Natural killer cell (primary cell): ENCODE measurements at regions of chr1 and their contacts with region 1.

Region 1: GRCh38 chr1:206583707-206584648 is 28.3 kb downstream of the EIF2D start:
- DNase-seq: peak; percentile 84 to 94
- ATAC-seq: peak; percentile 24 to 59 (median 39)
- H3K4me3 ChIP-seq: no peak overlapping the region
- H3K4me3 Mint-ChIP-seq: peak overlapping the region; percentile 94
- H3K27ac ChIP-seq: peak overlapping the region; percentile 98
- H3K27ac Mint-ChIP-seq: peak overlapping the region; percentile 90 to 100
- H3K4me1 ChIP-seq: peaks cover 51% of the 10 kb centered on the region
- H3K4me1 Mint-ChIP-seq: peaks cover 62 to 66% of the 10 kb centered on the region in 2 donors
- H3K27me3 ChIP-seq: no peaks in the 10 kb centered on the region
- H3K27me3 Mint-ChIP-seq: no peaks in the 10 kb centered on the region
- CTCF ChIP-seq: peak; percentile 88

Region 2: DNA sequence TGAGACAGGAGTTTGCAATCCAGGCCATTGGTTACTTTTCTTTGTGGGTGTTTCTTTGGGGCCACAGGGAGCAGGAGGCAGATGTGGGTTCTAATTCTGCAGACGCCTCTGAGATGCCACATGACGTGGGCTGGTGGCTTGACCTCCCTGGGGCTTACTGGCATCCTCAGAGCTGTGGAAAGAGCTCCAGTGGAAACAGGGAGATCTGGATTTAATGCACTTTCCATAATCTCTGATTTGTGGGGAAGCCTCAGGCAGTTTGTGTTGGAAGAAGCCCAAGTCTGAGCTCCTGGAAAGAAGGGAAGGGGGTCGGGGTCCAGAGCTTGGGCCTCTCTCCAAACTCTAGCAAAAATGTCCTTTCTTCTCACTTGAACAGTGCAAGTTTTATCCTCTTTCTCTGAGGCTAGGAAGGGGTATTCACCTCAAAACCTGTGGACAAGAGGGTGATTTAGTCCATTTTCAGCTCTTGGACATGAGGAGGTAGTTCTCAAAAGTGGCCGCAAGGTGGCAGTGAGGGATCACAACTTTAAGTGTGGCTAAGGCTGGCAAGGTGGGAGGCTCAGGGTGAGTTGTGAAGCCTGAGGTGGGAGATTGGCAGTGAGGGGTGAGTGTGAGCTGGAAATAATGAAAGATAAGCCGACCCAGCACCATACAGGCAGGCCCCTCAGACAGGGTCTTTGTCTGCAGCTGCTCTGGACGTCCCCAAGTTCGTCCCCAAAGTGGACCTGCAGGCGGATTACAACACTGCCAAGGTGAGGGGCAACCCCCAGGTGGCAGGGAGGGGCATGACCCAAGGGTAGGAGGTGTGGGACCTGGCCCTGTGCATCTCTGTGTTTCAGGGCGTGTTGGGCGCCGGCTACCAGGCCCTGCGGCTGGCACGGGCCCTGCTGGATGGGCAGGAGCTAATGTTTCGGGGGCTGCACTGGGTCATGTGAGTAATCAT is 104.5 kb before region 1 on chr1:
- intact Hi-C with region 1: loop called (anchors 1 kb)
- DNase-seq: peak; percentile 47 to 86
- ATAC-seq: peak; percentile 72 to 96 (median 90)
- H3K4me3 ChIP-seq: no peak overlapping the region
- H3K4me3 Mint-ChIP-seq: no peak overlapping the region
- H3K27ac ChIP-seq: no peak overlapping the region
- H3K27ac Mint-ChIP-seq: peak overlapping the region; percentile 3 to 73
- H3K4me1 ChIP-seq: no peaks in the 10 kb centered on the region
- H3K4me1 Mint-ChIP-seq: peaks cover 6 to 7% of the 10 kb centered on the region in 2 donors
- H3K27me3 ChIP-seq: no peaks in the 10 kb centered on the region
- H3K27me3 Mint-ChIP-seq: no peaks in the 10 kb centered on the region
- CTCF ChIP-seq: peak; percentile 68

Region 3: DNA sequence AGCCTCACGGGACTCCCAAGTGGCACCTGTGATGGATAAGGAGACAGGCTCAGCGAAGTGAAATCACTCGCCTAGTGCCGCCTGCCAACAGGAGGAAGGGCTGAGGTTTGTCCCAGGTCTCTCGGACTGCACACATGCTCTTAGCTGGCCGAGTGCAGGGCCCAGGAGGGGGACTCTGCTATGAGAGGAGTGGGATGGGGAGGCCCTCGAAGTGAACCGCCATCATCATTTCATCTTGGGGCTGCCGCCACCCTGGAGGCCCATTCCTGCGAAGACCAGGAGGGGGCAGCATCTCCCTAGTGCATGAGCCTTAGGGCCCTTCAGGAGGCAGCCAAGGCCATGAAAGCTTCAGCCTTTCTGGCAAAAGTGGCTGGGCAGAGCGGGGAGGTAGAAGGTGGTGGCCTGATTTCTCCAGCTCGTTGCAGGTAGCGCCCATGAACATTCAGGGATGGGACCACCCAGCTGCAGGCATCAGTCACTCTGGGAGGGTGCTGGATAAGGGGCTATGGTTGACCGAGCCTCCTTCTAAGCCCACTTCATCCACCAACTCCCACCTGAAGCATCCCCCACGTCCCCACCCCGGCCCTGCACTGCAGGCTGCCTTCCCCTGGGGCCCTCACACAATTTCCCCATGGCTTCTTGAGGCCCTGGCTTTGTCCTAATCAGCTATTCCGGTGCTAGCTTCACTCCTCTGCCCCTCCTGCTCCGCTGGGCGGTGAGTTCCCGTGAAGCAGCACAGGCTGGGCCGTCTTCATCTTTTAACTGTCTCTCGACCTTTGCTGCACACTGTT is 93.8 kb before region 1 on chr1:
- intact Hi-C with region 1: loop called (anchors 1 kb)
- DNase-seq: peak; percentile 64 to 79
- ATAC-seq: peak; percentile 83 to 97 (median 88)
- H3K4me3 ChIP-seq: no peak overlapping the region
- H3K4me3 Mint-ChIP-seq: no peak overlapping the region
- H3K27ac ChIP-seq: no peak overlapping the region
- H3K27ac Mint-ChIP-seq: no peak overlapping the region
- H3K4me1 ChIP-seq: peaks cover 4% of the 10 kb centered on the region
- H3K4me1 Mint-ChIP-seq: peaks cover 7 to 9% of the 10 kb centered on the region in 2 donors
- H3K27me3 ChIP-seq: no peaks in the 10 kb centered on the region
- H3K27me3 Mint-ChIP-seq: no peaks in the 10 kb centered on the region
- CTCF ChIP-seq: peak; percentile 78

Region 4: DNA sequence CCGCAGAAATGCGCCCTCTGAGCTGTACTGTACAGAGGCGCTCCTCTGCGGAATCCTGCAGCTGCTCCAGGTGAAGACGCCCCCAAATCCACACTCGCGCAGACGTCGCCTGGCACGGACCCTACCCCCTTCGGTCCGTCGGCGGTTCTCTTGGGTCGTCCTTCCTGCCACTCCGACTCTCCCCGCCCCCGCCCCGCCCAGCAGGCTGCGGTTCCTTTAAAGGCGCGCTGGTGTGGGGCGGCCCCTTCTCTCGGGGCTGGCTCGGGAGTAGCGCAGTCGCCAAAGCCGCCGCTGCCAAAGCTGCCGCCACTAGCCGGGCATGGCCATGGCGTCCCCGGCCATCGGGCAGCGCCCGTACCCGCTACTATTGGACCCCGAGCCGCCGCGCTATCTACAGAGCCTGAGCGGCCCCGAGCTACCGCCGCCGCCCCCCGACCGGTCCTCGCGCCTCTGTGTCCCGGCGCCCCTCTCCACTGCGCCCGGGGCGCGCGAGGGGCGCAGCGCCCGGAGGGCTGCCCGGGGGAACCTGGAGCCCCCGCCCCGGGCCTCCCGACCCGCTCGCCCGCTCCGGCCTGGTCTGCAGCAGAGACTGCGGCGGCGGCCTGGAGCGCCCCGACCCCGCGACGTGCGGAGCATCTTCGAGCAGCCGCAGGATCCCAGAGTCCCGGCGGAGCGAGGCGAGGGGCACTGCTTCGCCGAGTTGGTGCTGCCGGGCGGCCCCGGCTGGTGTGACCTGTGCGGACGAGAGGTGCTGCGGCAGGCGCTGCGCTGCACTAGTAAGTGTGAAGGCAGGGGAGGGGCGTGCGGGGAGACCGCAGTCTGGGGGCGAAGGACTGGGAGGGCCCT is 76.5 kb before region 1 on chr1 and contains the start of gene RASSF5:
- intact Hi-C with region 1: loop called (anchors 2 kb)
- DNase-seq: peak; percentile 78 to 81
- ATAC-seq: peak; percentile 75 to 90 (median 84)
- H3K4me3 ChIP-seq: peak within 1 kb of the TSS; percentile 57
- H3K4me3 Mint-ChIP-seq: peak within 1 kb of the TSS; percentile 82
- H3K27ac ChIP-seq: no peak within 1 kb of the TSS
- H3K27ac Mint-ChIP-seq: peak within 1 kb of the TSS; percentile 50 to 81
- H3K4me1 ChIP-seq: peaks cover 43% of the 10 kb centered on the region
- H3K4me1 Mint-ChIP-seq: peaks cover 38 to 52% of the 10 kb centered on the region in 2 donors
- H3K27me3 ChIP-seq: peaks cover 10% of the 10 kb centered on the region
- H3K27me3 Mint-ChIP-seq: peaks cover 0 to 6% of the 10 kb centered on the region in 2 donors
- CTCF ChIP-seq: no peak
- total RNA-seq, gene RASSF5: 231 to 333 (median 279) TPM

Region 5: DNA sequence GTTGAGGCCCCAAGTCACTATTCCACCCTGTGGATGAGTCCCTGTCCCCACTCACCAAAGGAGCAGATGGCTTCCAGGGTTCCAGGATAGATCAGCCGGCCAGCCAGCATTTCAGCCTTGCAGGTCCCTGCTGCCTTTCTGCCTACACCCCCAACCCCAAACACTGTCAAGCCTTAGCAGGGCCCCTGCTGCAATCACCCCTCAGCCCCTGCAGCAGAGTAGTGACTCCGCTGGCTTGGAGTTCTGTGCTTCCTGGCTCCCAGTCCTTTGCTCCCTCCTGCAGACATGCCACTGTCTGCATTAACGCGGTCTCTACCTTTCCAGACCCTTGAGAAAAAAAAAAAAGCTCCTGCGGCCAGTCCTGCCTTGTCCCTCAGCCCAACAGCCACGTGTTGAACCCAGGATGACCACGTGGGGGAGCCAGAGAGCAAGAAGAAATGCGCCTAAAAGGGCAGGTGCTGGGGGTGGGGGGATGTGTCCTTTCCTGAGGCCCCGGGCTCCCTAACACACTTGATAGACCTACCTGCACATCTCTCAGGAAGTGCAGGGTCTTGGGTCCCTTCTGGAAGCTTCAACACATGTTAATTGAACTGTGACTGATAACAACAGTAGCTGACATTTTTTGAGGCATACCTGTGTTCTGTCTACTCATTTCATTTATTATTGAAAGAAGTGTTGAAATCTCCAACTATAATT is 39.3 kb before region 1 on chr1:
- intact Hi-C with region 1: loop called (anchors 1 kb)
- DNase-seq: peak; percentile 82 to 88
- ATAC-seq: peak; percentile 83 to 97 (median 95)
- H3K4me3 ChIP-seq: no peak overlapping the region
- H3K4me3 Mint-ChIP-seq: no peak overlapping the region
- H3K27ac ChIP-seq: no peak overlapping the region
- H3K27ac Mint-ChIP-seq: no peak overlapping the region
- H3K4me1 ChIP-seq: peaks cover 6% of the 10 kb centered on the region
- H3K4me1 Mint-ChIP-seq: peaks cover 12 to 16% of the 10 kb centered on the region in 2 donors
- H3K27me3 ChIP-seq: no peaks in the 10 kb centered on the region
- H3K27me3 Mint-ChIP-seq: no peaks in the 10 kb centered on the region
- CTCF ChIP-seq: peak; percentile 94

Region 6: DNA sequence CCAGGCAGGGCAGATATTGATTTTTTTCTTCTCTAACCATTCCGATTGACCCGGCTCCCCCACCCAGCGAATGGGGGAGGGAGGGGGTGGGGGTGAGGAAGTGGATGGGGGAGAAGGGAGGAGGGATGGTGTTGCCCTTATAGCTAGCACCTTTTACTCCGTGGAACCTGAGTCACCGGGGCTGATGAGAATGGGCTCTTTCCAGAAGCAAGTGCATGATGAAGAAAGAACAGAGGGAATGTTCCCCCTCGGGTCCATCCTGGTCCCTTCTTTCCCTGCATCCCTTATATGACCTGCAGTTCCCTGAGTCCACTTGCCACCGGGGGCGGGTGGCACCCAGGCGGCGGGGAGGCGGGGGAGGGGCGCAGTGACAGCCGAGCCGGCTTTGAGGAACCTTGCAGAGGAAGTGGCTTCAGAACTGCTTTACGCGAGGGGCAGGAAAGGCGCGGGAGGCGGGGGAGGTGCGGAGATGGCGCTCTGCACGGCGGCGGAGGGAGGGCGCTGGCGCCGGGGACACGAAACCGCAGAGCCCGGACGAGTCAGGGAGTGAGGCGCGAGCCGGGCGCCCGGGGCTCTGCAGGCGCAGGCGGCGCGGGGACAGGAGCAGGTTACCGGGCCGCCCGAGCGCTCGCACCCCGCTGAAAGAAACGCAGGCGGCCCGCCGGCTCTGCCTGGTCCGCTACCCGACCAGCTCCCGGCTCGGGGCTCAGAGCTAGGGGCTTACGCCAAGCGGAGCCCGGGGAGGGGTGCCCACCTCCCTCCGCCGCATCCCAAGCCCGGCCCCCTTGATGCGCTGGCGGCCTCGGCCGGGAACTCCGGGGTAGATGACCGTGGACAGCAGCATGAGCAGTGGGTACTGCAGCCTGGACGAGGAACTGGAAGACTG is 27.0 kb before region 1 on chr1:
- intact Hi-C with region 1: loop called (anchors 1 kb)
- DNase-seq: peak; percentile 87 to 93
- ATAC-seq: peak; percentile 59 to 86 (median 77)
- H3K4me3 ChIP-seq: peak overlapping the region; percentile 70
- H3K4me3 Mint-ChIP-seq: peak overlapping the region; percentile 96
- H3K27ac ChIP-seq: peak overlapping the region; percentile 87
- H3K27ac Mint-ChIP-seq: peak overlapping the region; percentile 90 to 100
- H3K4me1 ChIP-seq: peaks cover 71% of the 10 kb centered on the region
- H3K4me1 Mint-ChIP-seq: peaks cover 82 to 89% of the 10 kb centered on the region in 2 donors
- H3K27me3 ChIP-seq: no peaks in the 10 kb centered on the region
- H3K27me3 Mint-ChIP-seq: no peaks in the 10 kb centered on the region
- CTCF ChIP-seq: no peak

Region 7: GRCh38 chr1:206706298-206706791 is 122.4 kb after region 1 on chr1:
- intact Hi-C with region 1: no loop called
- DNase-seq: no peak
- ATAC-seq: no peak
- H3K4me3 ChIP-seq: no peak overlapping the region
- H3K4me3 Mint-ChIP-seq: no peak overlapping the region
- H3K27ac ChIP-seq: no peak overlapping the region
- H3K27ac Mint-ChIP-seq: peak overlapping the region in 1 of 2 donors; percentile 52
- H3K4me1 ChIP-seq: peaks cover 60% of the 10 kb centered on the region
- H3K4me1 Mint-ChIP-seq: peaks cover 78 to 85% of the 10 kb centered on the region in 2 donors
- H3K27me3 ChIP-seq: no peaks in the 10 kb centered on the region
- H3K27me3 Mint-ChIP-seq: no peaks in the 10 kb centered on the region
- CTCF ChIP-seq: no peak